ENCODE measurements at regions of chr9 and their contacts with region 1.

Region 1: GRCh38 chr9:1875921-1876448 is 139.2 kb upstream of the SMARCA2 start:
- DNase-seq: peak; percentile 89
- H3K4me3 Mint-ChIP-seq: no peak overlapping the region
- H3K27ac Mint-ChIP-seq: peak overlapping the region; percentile 78
- H3K4me1 Mint-ChIP-seq: peaks cover 43% of the 10 kb centered on the region
- H3K27me3 Mint-ChIP-seq: peaks cover 10% of the 10 kb centered on the region

Region 2: GRCh38 chr9:1470001-1470804 is 405.8 kb before region 1 on chr9:
- CTCF ChIA-PET with region 1: no interaction called
- intact Hi-C with region 1: loop called (anchors 1 kb)
- DNase-seq: no peak
- H3K4me3 Mint-ChIP-seq: no peak overlapping the region
- H3K27ac Mint-ChIP-seq: no peak overlapping the region
- H3K4me1 Mint-ChIP-seq: peaks cover 4% of the 10 kb centered on the region
- H3K27me3 Mint-ChIP-seq: peaks cover 8% of the 10 kb centered on the region

Region 3: DNA sequence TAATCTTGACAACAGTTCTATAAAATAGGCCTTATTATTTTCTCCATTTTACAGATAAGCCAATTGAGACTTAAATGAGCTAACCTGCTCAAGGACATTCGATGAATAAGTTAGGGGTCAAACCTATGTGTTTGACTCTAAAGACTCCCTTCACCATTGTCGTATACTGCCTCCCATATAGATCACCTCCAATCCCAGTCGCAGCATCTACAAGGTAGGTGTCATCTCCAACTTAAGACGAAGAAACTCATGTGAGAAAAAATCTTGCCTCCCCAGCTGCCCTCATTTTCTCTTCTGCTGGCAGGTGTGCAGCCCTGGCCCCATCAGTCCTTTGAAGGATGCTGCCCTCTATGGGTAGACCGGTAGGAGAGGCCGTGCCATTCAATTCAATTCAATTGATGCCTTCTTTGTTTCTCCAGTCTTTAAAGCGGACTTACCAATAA is 64.0 kb after region 1 on chr9:
- CTCF ChIA-PET with region 1: interaction called, 5 read pairs
- intact Hi-C with region 1: loop called (anchors 2 kb)
- DNase-seq: peak; percentile 64
- H3K4me3 Mint-ChIP-seq: no peak overlapping the region
- H3K27ac Mint-ChIP-seq: no peak overlapping the region
- H3K4me1 Mint-ChIP-seq: peaks cover 4% of the 10 kb centered on the region
- H3K27me3 Mint-ChIP-seq: peaks cover 8% of the 10 kb centered on the region

Region 4: DNA sequence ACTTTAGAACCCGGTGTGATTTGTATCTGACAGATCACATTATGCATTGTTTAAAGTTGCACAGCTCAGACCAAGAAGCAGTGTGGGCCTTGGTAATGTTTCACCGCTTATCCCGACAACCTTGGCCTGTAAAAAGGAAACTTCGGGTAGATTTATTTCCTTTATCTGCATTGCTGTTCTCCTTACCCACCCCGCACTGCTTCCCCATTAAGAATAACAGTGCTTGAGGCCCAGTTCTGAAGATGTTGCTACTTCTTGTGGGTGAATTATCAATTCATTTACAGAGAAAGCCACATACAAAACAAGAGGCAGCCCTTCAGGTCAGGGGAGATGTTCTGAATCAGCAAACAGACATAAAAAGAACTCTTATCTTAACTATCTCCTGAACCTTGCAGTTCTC is 147.5 kb after region 1 on chr9:
- CTCF ChIA-PET with region 1: no interaction called
- intact Hi-C with region 1: loop called (anchors 1 kb)
- DNase-seq: peak; percentile 31
- H3K4me3 Mint-ChIP-seq: peak overlapping the region; percentile 60
- H3K27ac Mint-ChIP-seq: peak overlapping the region; percentile 69
- H3K4me1 Mint-ChIP-seq: peaks cover 88% of the 10 kb centered on the region
- H3K27me3 Mint-ChIP-seq: no peaks in the 10 kb centered on the region

Region 5: GRCh38 chr9:2066312-2067273 is 190.6 kb after region 1 on chr9:
- CTCF ChIA-PET with region 1: no interaction called
- intact Hi-C with region 1: loop called (anchors 1 kb)
- DNase-seq: no peak
- H3K4me3 Mint-ChIP-seq: no peak overlapping the region
- H3K27ac Mint-ChIP-seq: no peak overlapping the region
- H3K4me1 Mint-ChIP-seq: peaks cover 13% of the 10 kb centered on the region
- H3K27me3 Mint-ChIP-seq: no peaks in the 10 kb centered on the region

Region 6: GRCh38 chr9:2107906-2108451 is 232.0 kb after region 1 on chr9:
- CTCF ChIA-PET with region 1: no interaction called
- intact Hi-C with region 1: loop called (anchors 2 kb)
- DNase-seq: no peak
- H3K4me3 Mint-ChIP-seq: no peak overlapping the region
- H3K27ac Mint-ChIP-seq: peak overlapping the region; percentile 8
- H3K4me1 Mint-ChIP-seq: peaks cover 18% of the 10 kb centered on the region
- H3K27me3 Mint-ChIP-seq: no peaks in the 10 kb centered on the region